K562 (cell line): ENCODE measurements at regions of chr9 and their contacts with region 1.

Region 1: GRCh38 chr9:100714372-100715099 is 136.7 kb downstream of the CAVIN4 start:
- DNase-seq: peak; percentile 72 to 81 (median 76)
- ATAC-seq: peak; percentile 97
- H3K4me3 ChIP-seq: no peak overlapping the region
- H3K27ac ChIP-seq: no peak overlapping the region
- H3K4me1 ChIP-seq: no peaks in the 10 kb centered on the region
- H3K27me3 ChIP-seq: no peaks in the 10 kb centered on the region
- CTCF ChIP-seq: peak; percentile 64 to 85 (median 79)
- EP300 ChIP-seq: no peak
- POLR2A ChIP-seq: no peak
- RAD21 ChIP-seq: peak; percentile 74 to 75

Region 2: GRCh38 chr9:100473276-100474081 is 241.1 kb before region 1 on chr9:
- CTCF ChIA-PET with region 1: no interaction called
- POLR2A ChIA-PET with region 1: no interaction called
- in situ Hi-C with region 1: no loop called
- intact Hi-C with region 1: no loop called
- DNase-seq: peak; percentile 46 to 57 (median 51)
- ATAC-seq: peak; percentile 78
- H3K4me3 ChIP-seq: peak overlapping the region; percentile 43
- H3K27ac ChIP-seq: no peak overlapping the region
- H3K4me1 ChIP-seq: peaks cover 6 to 17% of the 10 kb centered on the region in 2 experiments; a peak in 4 of 5 replicates
- H3K27me3 ChIP-seq: peaks cover 0 to 10% of the 10 kb centered on the region in 2 experiments; a peak in 4 of 5 replicates
- CTCF ChIP-seq: no peak
- EP300 ChIP-seq: no peak
- POLR2A ChIP-seq: no peak
- RAD21 ChIP-seq: no peak

Region 3: GRCh38 chr9:101220341-101220740 is 505.8 kb after region 1 on chr9:
- CTCF ChIA-PET with region 1: no interaction called
- POLR2A ChIA-PET with region 1: no interaction called
- in situ Hi-C with region 1: no loop called
- intact Hi-C with region 1: loop called (anchors 5 kb)
- DNase-seq: no peak
- ATAC-seq: no peak
- H3K4me3 ChIP-seq: no peak overlapping the region
- H3K27ac ChIP-seq: no peak overlapping the region
- H3K4me1 ChIP-seq: no peaks in the 10 kb centered on the region
- H3K27me3 ChIP-seq: no peaks in the 10 kb centered on the region
- CTCF ChIP-seq: no peak
- EP300 ChIP-seq: no peak
- POLR2A ChIP-seq: no peak
- RAD21 ChIP-seq: no peak

Region 4: DNA sequence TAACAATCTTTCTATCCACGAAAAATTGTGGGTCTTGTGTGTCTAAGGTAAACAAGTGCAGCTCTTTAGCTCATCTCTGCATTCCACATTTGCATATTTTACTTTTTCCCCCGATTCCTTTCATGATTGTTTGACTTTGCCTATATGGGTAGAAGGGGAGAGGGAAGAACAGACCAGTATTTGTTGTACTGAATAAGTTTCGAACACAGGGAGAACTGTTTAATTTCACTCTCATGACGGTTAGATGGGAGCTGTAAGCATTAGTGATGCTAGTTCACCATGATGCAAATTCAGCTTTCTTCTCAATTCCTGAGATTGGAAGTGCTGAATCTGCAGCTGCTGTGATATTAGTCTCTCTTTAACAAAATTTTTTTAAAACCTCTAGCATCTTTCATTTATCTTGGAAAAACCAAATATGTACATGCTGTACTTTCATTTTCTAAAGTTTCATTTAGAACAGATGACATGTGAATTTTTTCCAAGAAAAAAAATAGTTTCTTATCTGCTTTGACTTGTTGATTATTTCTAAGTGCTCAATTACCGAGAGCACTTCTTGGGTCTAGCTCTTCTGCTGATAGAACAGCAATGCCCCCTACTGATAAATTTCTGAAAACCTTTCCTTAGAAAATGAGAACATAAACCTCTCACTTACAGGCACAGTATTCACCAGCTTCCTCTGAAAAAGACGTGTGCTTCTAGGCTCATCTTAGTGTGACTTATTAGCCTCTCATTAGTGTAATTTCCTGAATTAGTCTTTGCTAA is 520.8 kb after region 1 on chr9:
- CTCF ChIA-PET with region 1: interaction called, 3 read pairs
- POLR2A ChIA-PET with region 1: no interaction called
- in situ Hi-C with region 1: no loop called
- intact Hi-C with region 1: loop called (anchors 5 kb)
- DNase-seq: peak in 2 of 4 experiments; percentile 17
- ATAC-seq: peak; percentile 71
- H3K4me3 ChIP-seq: no peak overlapping the region
- H3K27ac ChIP-seq: no peak overlapping the region
- H3K4me1 ChIP-seq: no peaks in the 10 kb centered on the region
- H3K27me3 ChIP-seq: no peaks in the 10 kb centered on the region
- CTCF ChIP-seq: peak in 2 of 3 experiments; percentile 23 to 54; a peak in 4 of 6 replicates
- EP300 ChIP-seq: no peak
- POLR2A ChIP-seq: no peak
- RAD21 ChIP-seq: peak; percentile 10 to 47; a peak in 2 of 4 replicates

Region 5: DNA sequence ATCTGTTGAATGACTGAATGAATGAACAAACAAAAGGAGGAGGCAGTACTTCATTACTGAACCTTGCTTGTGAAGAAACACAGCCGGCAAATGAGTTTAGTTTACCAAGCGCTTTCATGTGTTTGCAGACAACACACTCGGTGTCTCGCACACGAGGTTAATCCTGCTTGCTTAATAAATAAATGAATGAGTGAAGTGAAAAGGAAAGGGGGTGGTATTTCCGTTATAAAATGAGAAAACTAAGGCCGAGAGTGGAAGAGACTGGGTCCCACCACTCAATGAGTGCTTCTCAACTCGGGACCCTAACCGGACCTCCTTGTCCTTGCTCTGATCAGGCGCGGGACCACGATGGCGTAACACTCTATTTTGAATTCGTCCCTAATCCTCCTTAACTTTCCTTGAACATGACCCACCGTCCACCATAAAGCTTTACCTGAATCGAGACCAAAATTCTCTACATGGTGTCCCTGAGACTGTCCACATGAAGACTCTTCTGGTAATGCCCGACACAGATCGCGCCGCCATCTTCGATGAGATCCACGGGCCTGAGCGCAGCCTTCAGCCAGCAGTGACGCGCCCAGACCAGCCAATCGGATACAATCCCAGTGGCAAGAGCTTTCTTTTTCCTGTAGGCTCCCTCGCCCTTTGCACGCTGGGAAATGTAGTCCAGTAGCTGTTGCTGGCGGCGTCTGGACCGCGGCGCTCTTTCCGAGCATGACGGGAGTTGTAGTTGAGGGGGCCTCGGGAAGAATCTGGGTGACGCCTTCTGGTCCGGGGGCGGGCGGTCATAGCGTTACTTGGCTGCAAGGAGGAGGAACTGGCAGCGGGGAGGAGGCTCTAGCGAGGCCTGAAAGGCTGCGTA is 683.8 kb after region 1 on chr9 and contains the starts of genes MRPL50 and ZNF189:
- CTCF ChIA-PET with region 1: no interaction called
- POLR2A ChIA-PET with region 1: no interaction called
- in situ Hi-C with region 1: no loop called
- intact Hi-C with region 1: loop called (anchors 10 kb)
- DNase-seq: peak; percentile 88 to 98 (median 92)
- ATAC-seq: peak; percentile 97
- H3K4me3 ChIP-seq: peak within 1 kb of the TSS; percentile 79
- H3K27ac ChIP-seq: peak within 1 kb of the TSS; percentile 96
- H3K4me1 ChIP-seq: peaks cover 11 to 17% of the 10 kb centered on the region in 2 experiments; a peak in 3 of 5 replicates
- H3K27me3 ChIP-seq: no peaks in the 10 kb centered on the region
- CTCF ChIP-seq: 0 out of 6 replicates have a peak, but pooled peaks of 1 of the 3 experiments have one; percentile 13
- EP300 ChIP-seq: no peak
- POLR2A ChIP-seq: peak; percentile 98
- RAD21 ChIP-seq: no peak
- polyA plus RNA-seq, gene MRPL50: 80.1 to 107 TPM
- polyA plus RNA-seq, gene ZNF189: 2.4 to 3.5 TPM

Region 6: GRCh38 chr9:101458955-101459631 is 744.6 kb after region 1 on chr9:
- CTCF ChIA-PET with region 1: no interaction called
- POLR2A ChIA-PET with region 1: no interaction called
- in situ Hi-C with region 1: no loop called
- intact Hi-C with region 1: loop called (anchors 10 kb)
- DNase-seq: peak in 3 of 4 experiments; percentile 18 to 70 (median 43)
- ATAC-seq: peak; percentile 92
- H3K4me3 ChIP-seq: no peak overlapping the region
- H3K27ac ChIP-seq: no peak overlapping the region
- H3K4me1 ChIP-seq: peaks cover 0 to 15% of the 10 kb centered on the region in 2 experiments; a peak in 3 of 5 replicates
- H3K27me3 ChIP-seq: no peaks in the 10 kb centered on the region
- CTCF ChIP-seq: peak; percentile 70 to 82 (median 75)
- EP300 ChIP-seq: no peak
- POLR2A ChIP-seq: no peak
- RAD21 ChIP-seq: peak; percentile 78 to 82